Transverse colon (tissue), 4 donors: ENCODE measurements at regions of chr19 and their contacts with region 1.

Region 1: DNA sequence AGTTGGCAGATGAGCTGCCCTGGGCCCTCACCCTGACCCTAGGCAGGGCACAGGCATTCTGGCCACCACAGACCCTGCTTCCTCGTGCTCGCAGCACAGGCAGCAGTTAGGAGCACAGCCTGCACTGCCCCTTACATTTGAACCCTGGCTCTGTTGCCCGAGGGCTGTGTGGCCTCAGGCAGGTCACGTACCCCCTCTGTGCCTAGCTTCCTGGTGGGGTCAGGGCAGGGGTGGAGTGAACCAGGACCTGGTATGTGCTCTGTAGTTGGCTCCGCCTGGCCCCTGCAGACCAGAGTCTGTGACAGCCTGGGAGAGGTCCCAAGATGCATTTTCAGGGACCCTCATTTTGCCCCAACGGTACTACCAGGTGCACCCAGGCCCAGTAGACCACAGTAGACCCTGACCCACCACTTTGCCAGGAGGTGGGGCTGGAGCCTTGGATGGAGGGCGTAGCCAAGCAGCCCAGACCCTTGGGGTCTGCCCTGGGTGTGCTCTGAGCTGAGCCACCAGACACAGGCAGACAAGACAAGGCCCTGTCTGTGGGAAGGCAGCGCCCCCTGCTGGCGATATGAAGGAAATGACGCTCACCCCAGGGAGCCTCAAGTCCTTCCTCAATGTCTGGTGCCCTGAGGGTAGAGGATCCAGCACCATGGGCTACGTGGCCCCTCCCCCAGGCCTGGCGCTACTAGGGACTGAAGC is 9.1 kb downstream of the LYL1 start:
- DNase-seq: peak; percentile 86
- H3K4me3 ChIP-seq: no peak overlapping the region
- H3K27ac ChIP-seq: peak overlapping the region; percentile 89 to 93 (median 92)
- H3K4me1 ChIP-seq: peaks cover 31 to 69% (median 50%) of the 10 kb centered on the region in 4 donors
- H3K27me3 ChIP-seq: no peaks in the 10 kb centered on the region
- CTCF ChIP-seq: peak; percentile 94 to 97 (median 96)
- EP300 ChIP-seq: no peak
- POLR2A ChIP-seq: no peak

Region 2: GRCh38 chr19:12881172-12881808 is 212.3 kb before region 1 on chr19 and contains the start of gene DNASE2:
- in situ Hi-C with region 1: no loop called
- intact Hi-C with region 1: loop called (anchors 10 kb)
- DNase-seq: peak; percentile 97
- H3K4me3 ChIP-seq: peak within 1 kb of the TSS; percentile 64 to 81 (median 72)
- H3K27ac ChIP-seq: peak within 1 kb of the TSS; percentile 82 to 94 (median 90)
- H3K4me1 ChIP-seq: peaks cover 0 to 27% (median 25%) of the 10 kb centered on the region in 4 donors
- H3K27me3 ChIP-seq: peaks cover 13% of the 10 kb centered on the region
- CTCF ChIP-seq: no peak
- EP300 ChIP-seq: no peak
- POLR2A ChIP-seq: peak; percentile 88
- total RNA-seq, gene DNASE2: 24.6 to 34.4 (median 34.4) TPM

Region 3: GRCh38 chr19:12974301-12975220 is 119.0 kb before region 1 on chr19:
- in situ Hi-C with region 1: loop called in 2 of 4 experiments (anchors 5 to 25 kb)
- intact Hi-C with region 1: loop called (anchors 2 kb)
- DNase-seq: no peak
- H3K4me3 ChIP-seq: no peak overlapping the region
- H3K27ac ChIP-seq: no peak overlapping the region
- H3K4me1 ChIP-seq: peaks cover 0 to 3% (median 0%) of the 10 kb centered on the region in 4 donors
- H3K27me3 ChIP-seq: no peaks in the 10 kb centered on the region
- CTCF ChIP-seq: no peak
- EP300 ChIP-seq: no peak
- POLR2A ChIP-seq: no peak

Region 4: DNA sequence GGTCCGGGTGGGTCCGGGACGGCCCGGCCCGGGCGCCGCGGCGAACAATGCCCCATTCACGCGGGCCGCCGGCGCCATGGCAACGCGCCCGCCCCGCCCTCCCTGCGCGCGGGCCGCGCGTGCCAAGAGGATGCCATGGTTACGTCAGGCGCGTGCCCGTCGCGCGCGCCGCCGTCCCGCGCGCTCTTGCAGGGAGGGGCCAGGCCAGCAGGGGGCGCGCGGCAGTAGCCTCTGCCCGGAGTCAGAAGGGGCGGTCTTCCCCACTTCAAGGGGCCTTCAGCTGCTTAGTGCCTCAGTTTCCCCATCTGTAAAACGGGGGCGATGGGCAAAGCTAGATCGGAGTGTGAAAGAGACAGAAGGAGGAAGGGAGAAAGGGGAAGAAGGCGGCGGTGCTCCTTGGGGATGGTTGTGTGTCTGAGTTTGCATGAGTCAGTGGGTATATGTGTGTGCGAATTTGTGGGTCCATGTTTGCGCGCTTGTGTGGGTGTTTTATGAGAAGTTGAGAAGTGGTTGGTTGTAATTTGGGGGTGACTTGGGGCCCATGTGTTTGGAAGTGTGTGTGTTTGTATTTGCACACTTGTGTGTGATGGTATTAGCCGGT is 109.9 kb before region 1 on chr19:
- in situ Hi-C with region 1: loop called (anchors 5 to 25 kb)
- intact Hi-C with region 1: loop called (anchors 2 kb)
- DNase-seq: peak; percentile 85
- H3K4me3 ChIP-seq: peak overlapping the region in 2 of 4 donors; percentile 15 to 39
- H3K27ac ChIP-seq: no peak overlapping the region
- H3K4me1 ChIP-seq: peaks cover 5 to 21% (median 18%) of the 10 kb centered on the region in 4 donors
- H3K27me3 ChIP-seq: no peaks in the 10 kb centered on the region
- CTCF ChIP-seq: peak; percentile 94 to 99 (median 96)
- EP300 ChIP-seq: no peak
- POLR2A ChIP-seq: no peak

Region 5: GRCh38 chr19:13537454-13537853 is 443.9 kb after region 1 on chr19:
- in situ Hi-C with region 1: no loop called
- intact Hi-C with region 1: no loop called
- DNase-seq: no peak
- H3K4me3 ChIP-seq: no peak overlapping the region
- H3K27ac ChIP-seq: no peak overlapping the region
- H3K4me1 ChIP-seq: no peaks in the 10 kb centered on the region
- H3K27me3 ChIP-seq: peaks cover 10% of the 10 kb centered on the region
- CTCF ChIP-seq: no peak
- EP300 ChIP-seq: no peak
- POLR2A ChIP-seq: no peak